Psoas muscle (tissue), 8 donors: ENCODE measurements at regions of chr1 and their contacts with region 1.

Region 1: DNA sequence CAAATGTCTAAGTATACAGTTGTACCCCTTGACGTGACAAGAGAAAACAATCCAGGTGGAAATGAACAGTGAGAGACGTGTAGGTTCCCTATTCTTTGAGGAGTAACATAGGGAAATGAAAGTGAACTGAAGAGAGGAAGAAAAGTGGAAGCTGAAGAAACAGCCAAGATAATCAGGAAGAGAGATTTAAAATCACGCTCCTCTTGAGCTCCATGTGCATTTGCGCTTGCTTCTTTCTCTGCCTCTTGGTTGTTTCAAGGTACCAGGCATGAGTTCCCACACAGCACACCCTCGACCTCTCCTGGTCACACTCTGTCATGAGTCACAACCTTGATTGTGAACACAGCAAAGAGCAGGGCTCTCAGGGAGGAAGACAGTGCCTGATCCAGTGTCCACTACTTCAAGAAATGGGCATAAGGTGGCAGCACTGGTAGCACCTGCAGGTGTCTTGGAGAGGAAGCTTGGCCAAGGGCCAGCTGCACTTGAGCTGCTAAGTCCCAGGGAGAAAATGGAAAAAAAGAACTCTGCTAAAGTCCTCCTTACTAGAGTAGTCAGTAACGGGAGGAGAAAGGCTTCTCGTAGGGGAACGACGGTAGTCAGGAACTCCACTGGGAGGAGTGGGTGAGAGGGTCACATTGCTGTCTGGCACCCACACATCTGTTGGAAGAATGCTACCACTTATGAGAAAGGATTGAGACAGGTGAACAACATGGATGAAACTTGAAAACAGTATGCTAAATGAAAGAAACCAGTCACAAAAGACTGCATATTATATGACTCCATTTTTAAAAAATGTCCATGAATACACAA is 18.3 kb upstream of the ARID1A start:
- DNase-seq: peak; percentile 61 to 86
- ATAC-seq: peak; percentile 100
- H3K4me3 ChIP-seq: peak overlapping the region; percentile 41
- H3K27ac ChIP-seq: peak overlapping the region; percentile 39
- H3K4me1 ChIP-seq: peaks cover 8% of the 10 kb centered on the region
- H3K27me3 ChIP-seq: no peaks in the 10 kb centered on the region
- CTCF ChIP-seq: peak; percentile 73

Region 2: DNA sequence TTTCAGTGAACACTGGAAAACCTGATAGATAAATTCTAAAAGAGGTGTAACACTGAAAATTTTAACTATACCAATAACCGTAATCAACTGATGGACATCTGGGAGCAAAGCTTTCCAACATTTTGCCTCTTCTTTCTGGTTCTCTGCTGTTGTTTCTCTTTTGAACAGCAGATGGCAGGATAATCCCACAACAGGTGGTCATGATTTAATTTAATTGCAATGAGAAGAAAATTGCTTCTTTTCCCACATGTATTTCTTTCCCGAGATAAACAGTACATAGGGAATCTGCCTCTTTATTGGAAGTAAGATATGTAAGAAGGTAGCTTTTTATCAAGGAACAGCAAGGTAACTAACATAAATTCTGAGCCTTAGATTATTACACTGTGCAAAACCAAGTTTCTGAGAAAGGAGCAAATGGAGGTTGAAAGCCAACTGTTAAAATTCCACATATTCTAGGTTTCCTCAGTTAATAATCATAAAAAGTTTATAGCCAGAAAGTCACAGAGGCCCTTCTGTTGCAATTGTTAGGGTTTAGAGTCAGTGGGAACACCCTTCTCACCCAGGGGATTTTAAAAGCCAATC is 75.0 kb before region 1 on chr1:
- intact Hi-C with region 1: loop called in 1 of 2 experiments (anchors 2 kb)
- DNase-seq: no peak
- ATAC-seq: peak; percentile 54 to 83 (median 64)
- H3K4me3 ChIP-seq: no peak overlapping the region
- H3K27ac ChIP-seq: no peak overlapping the region
- H3K4me1 ChIP-seq: peaks cover 6% of the 10 kb centered on the region
- H3K27me3 ChIP-seq: no peaks in the 10 kb centered on the region
- CTCF ChIP-seq: peak; percentile 91